ENCODE measurements at regions of chr5 and their contacts with region 1.

Region 1: DNA sequence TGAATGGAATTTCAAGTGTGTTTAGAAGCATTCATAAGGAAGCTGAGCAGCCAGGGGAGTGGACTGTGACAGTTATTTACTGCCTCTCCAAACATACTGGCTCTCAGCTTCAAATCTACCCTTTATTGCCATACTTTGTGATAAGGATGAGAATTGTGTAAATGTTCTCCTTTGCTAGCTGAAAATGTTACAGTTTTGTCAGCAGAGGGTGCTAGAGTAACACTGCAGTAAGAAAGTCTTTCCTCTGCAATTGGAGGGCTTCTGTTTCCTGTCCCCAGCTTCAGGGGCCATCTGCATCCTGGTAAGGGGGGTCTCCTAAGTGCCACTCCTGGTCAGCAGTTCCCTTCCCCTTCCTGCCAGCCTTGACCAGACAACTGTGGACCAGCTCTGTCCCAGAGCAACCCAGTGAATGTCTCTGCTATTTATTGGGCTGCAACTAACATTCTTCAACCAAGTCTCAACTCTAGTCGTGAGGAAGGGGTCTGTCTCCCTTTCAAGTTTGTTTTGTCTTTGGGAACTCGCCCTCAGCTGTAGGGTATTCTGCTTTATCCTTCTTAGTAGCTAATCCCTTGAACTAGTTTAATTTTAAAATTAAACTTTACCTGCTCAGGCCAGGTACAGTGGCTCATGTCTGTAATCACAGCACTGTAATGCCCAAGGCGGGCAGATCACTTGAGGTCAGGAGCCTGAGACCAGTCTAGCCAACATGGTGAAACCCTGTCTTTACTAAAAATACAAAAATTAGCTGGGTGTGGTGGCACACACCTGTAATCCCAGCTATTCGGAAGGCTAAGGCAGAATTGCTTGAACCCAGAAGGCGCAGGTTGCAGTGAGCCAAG is 45.3 kb downstream of the RAPGEF6 start:
- DNase-seq: peak; percentile 13
- ATAC-seq: peak; percentile 74
- H3K4me3 Mint-ChIP-seq: no peak overlapping the region
- H3K27ac Mint-ChIP-seq: no peak overlapping the region
- H3K4me1 Mint-ChIP-seq: peaks cover 40% of the 10 kb centered on the region
- H3K27me3 Mint-ChIP-seq: no peaks in the 10 kb centered on the region

Region 2: DNA sequence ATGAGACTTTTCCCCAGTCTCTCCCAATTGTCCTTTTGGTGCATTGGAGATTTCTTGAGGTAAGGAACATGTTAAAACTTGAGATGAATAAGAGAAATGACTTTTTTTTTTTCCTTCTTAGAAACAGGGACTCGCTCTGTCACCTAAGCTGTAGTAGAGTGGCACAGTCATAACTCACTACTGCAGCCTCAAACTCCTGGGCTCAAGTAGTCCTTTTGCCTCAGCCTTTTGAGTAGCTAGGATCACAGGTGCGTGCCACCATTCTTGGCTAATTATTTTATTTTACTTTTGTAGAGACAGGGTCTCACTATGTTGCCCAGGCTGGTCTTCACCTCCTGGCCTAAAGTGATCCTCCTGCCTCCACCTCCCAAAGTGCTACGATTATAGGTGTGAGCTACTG is 300.0 kb before region 1 on chr5:
- CTCF ChIA-PET with region 1: no interaction called
- POLR2A ChIA-PET with region 1: no interaction called
- intact Hi-C with region 1: no loop called
- DNase-seq: peak; percentile 61
- ATAC-seq: peak; percentile 80
- H3K4me3 Mint-ChIP-seq: peak overlapping the region; percentile 64
- H3K27ac Mint-ChIP-seq: peak overlapping the region; percentile 98
- H3K4me1 Mint-ChIP-seq: peaks cover 72% of the 10 kb centered on the region
- H3K27me3 Mint-ChIP-seq: no peaks in the 10 kb centered on the region

Region 3: GRCh38 chr5:131564229-131564652 is 25.5 kb before region 1 on chr5:
- CTCF ChIA-PET with region 1: interaction called, 17 read pairs
- POLR2A ChIA-PET with region 1: interaction called, 5 read pairs
- intact Hi-C with region 1: no loop called
- DNase-seq: no peak
- ATAC-seq: no peak
- H3K4me3 Mint-ChIP-seq: no peak overlapping the region
- H3K27ac Mint-ChIP-seq: no peak overlapping the region
- H3K4me1 Mint-ChIP-seq: peaks cover 38% of the 10 kb centered on the region
- H3K27me3 Mint-ChIP-seq: no peaks in the 10 kb centered on the region

Region 4: GRCh38 chr5:131640043-131640856 is 50.5 kb after region 1 on chr5:
- CTCF ChIA-PET with region 1: interaction called, 17 read pairs
- POLR2A ChIA-PET with region 1: no interaction called
- intact Hi-C with region 1: loop called (anchors 2 kb)
- DNase-seq: peak; percentile 85
- ATAC-seq: peak; percentile 97
- H3K4me3 Mint-ChIP-seq: peak overlapping the region; percentile 24
- H3K27ac Mint-ChIP-seq: peak overlapping the region; percentile 88
- H3K4me1 Mint-ChIP-seq: peaks cover 28% of the 10 kb centered on the region
- H3K27me3 Mint-ChIP-seq: no peaks in the 10 kb centered on the region

Measured in activated CD4-positive, alpha-beta T cell treated with anti-CD3 and anti-CD28 coated beads for 36 hours (primary cell).